Left lung (tissue), 14 donors: ENCODE measurements at regions of chr2 and their contacts with region 1.

Region 1: GRCh38 chr2:130873700-130874346 is 37.1 kb downstream of the ARHGEF4 start:
- DNase-seq: peak in 3 of 4 donors; percentile 53 to 77 (median 59)
- ATAC-seq: peak; percentile 92
- H3K4me3 ChIP-seq: no peak overlapping the region
- H3K27ac ChIP-seq: no peak overlapping the region
- H3K4me1 ChIP-seq: no peaks in the 10 kb centered on the region
- H3K27me3 ChIP-seq: peaks cover 0 to 19% of the 10 kb centered on the region in 2 donors
- CTCF ChIP-seq: peak; percentile 54 to 67

Region 2: GRCh38 chr2:130797493-130798435 is 76.1 kb before region 1 on chr2:
- intact Hi-C with region 1: loop called in 1 of 2 experiments (anchors 5 kb)
- DNase-seq: peak; percentile 89 to 98 (median 91)
- ATAC-seq: peak; percentile 99
- H3K4me3 ChIP-seq: peak overlapping the region; percentile 73 to 91
- H3K27ac ChIP-seq: peak overlapping the region; percentile 86 to 87
- H3K4me1 ChIP-seq: peaks cover 6 to 12% of the 10 kb centered on the region in 2 donors
- H3K27me3 ChIP-seq: peaks cover 0 to 27% of the 10 kb centered on the region in 2 donors
- CTCF ChIP-seq: peak; percentile 77 to 91